GM13976 (cell line): ENCODE measurements at regions of chr2 and their contacts with region 1.

Region 1: DNA sequence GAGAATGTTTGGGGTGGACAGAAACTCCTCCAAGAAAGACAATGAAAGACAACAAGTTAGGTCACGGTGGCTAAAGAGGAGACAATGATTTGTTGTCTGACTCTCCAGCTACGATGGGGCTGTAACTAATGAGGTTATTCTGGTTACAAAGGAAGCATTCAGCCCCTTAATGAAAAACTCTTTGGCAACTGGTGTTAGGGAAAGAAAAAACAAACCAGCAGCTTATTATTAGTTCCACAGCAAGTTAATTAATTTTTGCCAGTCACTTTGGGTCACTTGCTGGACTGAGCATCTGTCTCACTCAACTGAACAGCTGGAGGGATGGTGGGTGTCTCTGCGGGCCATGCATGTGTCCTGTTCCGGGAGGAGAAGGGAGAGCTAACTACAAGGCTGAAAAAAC is 263.7 kb downstream of the ALK start:
- DNase-seq: no peak
- CTCF ChIP-seq: no peak

Region 2: GRCh38 chr2:29796446-29796845 is 138.8 kb after region 1 on chr2:
- in situ Hi-C with region 1: no loop called
- DNase-seq: no peak
- CTCF ChIP-seq: no peak

Region 3: GRCh38 chr2:29834624-29835023 is 176.9 kb after region 1 on chr2:
- in situ Hi-C with region 1: loop called (anchors 10 kb)
- DNase-seq: no peak
- CTCF ChIP-seq: no peak